ENCODE measurements at regions of chr5 and their contacts with region 1.

Region 1: GRCh38 chr5:111757355-111758283 is 625 bp upstream of the NREP start:
- DNase-seq: peak; percentile 96
- H3K4me3 Mint-ChIP-seq: peak overlapping the region; percentile 89
- H3K27ac Mint-ChIP-seq: peak overlapping the region; percentile 93
- H3K4me1 Mint-ChIP-seq: peaks cover 23% of the 10 kb centered on the region
- H3K27me3 Mint-ChIP-seq: peaks cover 5% of the 10 kb centered on the region

Region 2: DNA sequence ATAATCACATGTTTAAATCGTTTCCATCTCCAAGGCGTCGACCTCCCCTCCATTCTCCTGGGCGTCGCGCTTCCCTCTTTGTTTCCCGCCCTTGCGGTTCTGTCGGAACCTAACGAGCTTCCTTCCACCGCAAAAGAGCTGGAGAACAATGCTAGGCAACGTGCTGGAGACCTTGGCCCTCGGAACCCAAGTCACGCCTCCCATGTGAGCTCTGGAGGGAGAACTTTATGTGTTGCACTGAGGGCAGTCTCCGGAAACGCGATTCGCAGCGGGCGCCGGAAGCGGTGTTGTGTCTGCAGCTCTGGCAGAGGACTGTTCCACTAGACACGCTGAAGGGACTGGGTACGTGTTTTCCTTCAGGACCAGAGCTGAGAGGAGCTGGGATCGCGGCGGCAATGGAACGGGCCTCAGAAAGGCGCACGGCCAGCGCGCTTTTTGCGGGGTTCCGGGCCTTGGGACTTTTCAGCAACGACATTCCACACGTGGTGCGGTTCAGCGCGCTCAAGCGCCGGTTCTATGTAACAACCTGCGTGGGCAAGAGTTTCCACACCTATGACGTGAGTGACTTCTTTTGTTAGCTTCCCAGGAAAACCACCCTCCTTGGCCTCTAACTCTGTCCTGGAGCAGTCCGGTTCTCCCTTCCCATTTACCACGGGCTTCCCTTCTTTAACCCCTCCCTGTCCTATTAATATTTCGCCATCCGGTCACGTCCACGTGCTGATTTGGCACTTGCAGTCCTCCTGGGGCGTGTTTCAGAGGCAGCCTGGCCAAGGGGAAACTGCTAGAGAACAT is 665.4 kb before region 1 on chr5 and contains the start of gene WDR36:
- intact Hi-C with region 1: loop called (anchors 1 kb)
- DNase-seq: peak; percentile 97
- H3K4me3 Mint-ChIP-seq: peak within 1 kb of the TSS; percentile 96
- H3K27ac Mint-ChIP-seq: peak within 1 kb of the TSS; percentile 98
- H3K4me1 Mint-ChIP-seq: peaks cover 22% of the 10 kb centered on the region
- H3K27me3 Mint-ChIP-seq: peaks cover 2% of the 10 kb centered on the region
- total RNA-seq, gene WDR36: 90.1 and 97.7 TPM in 2 replicates

Region 3: GRCh38 chr5:111337688-111338087 is 419.9 kb before region 1 on chr5:
- intact Hi-C with region 1: loop called (anchors 5 kb)
- DNase-seq: peak; percentile 59
- H3K4me3 Mint-ChIP-seq: no peak overlapping the region
- H3K27ac Mint-ChIP-seq: peak overlapping the region; percentile 80
- H3K4me1 Mint-ChIP-seq: peaks cover 24% of the 10 kb centered on the region
- H3K27me3 Mint-ChIP-seq: no peaks in the 10 kb centered on the region

Region 4: GRCh38 chr5:111550279-111551020 is 207.2 kb before region 1 on chr5:
- intact Hi-C with region 1: loop called (anchors 10 kb)
- DNase-seq: peak; percentile 93
- H3K4me3 Mint-ChIP-seq: peak overlapping the region; percentile 20
- H3K27ac Mint-ChIP-seq: peak overlapping the region; percentile 72
- H3K4me1 Mint-ChIP-seq: peaks cover 36% of the 10 kb centered on the region
- H3K27me3 Mint-ChIP-seq: peaks cover 4% of the 10 kb centered on the region

Region 5: GRCh38 chr5:111742177-111742994 is 15.2 kb before region 1 on chr5:
- intact Hi-C with region 1: loop called (anchors 2 kb)
- DNase-seq: no peak
- H3K4me3 Mint-ChIP-seq: peak overlapping the region; percentile 75
- H3K27ac Mint-ChIP-seq: peak overlapping the region; percentile 54
- H3K4me1 Mint-ChIP-seq: peaks cover 37% of the 10 kb centered on the region
- H3K27me3 Mint-ChIP-seq: no peaks in the 10 kb centered on the region

Region 6: GRCh38 chr5:112551419-112552032 is 793.9 kb after region 1 on chr5:
- intact Hi-C with region 1: no loop called
- DNase-seq: peak; percentile 79
- H3K4me3 Mint-ChIP-seq: no peak overlapping the region
- H3K27ac Mint-ChIP-seq: no peak overlapping the region
- H3K4me1 Mint-ChIP-seq: peaks cover 2% of the 10 kb centered on the region
- H3K27me3 Mint-ChIP-seq: peaks cover 20% of the 10 kb centered on the region

Measured in activated CD4-positive, alpha-beta T cell treated with anti-CD3 and anti-CD28 coated beads, Interleukin-2, amount 10 ng/mL, durations not matched to agents 24 days and 14 days (primary cell).